ENCODE measurements at regions of chr1 and their contacts with region 1.

Region 1: DNA sequence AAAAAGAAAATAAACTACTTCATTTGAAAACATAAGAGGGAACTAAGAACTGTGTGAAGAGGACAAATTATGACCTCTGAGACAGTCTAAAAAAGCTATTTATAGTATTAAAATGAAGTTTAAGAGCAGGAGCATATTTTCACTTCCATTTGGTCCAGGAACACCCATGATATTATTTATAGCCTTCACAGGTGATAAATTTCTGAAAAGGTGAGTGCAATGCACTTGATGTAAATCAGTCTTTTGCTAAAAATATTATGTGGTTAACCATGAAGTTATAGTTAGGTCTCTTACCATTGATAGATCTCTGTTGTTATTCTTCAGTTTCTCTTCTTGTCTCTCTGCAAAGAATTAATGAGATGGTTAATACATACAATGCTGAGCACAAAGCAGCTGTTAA is 14.7 kb downstream of the TMCO1 start:
- DNase-seq: peak; percentile 49
- H3K4me3 ChIP-seq: no peak overlapping the region
- H3K27ac ChIP-seq: no peak overlapping the region
- H3K4me1 ChIP-seq: peaks cover 14% of the 10 kb centered on the region
- CTCF ChIP-seq: no peak

Region 2: DNA sequence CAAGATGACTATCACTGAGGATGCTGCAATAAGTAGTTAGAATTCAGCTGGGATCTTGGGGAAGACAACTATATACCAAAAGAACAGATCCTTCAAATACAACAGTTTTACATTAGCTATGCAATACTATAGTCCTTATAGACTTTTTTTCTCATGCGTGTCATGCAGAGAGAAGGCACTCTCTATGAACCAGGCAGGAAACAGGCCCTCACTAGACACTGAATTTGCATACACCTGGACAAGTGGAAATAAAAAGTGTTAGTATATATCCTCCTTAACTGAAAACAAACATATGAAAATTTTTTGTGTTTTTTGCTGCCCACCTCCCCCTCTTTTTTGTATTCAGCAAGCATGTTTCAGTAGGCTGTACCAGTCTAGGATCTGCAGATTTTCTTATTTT is 15.1 kb before region 1 on chr1:
- CTCF ChIA-PET with region 1: no interaction called
- POLR2A ChIA-PET with region 1: interaction called, 5 read pairs
- intact Hi-C with region 1: loop called (anchors 2 kb)
- DNase-seq: peak; percentile 70
- H3K4me3 ChIP-seq: no peak overlapping the region
- H3K27ac ChIP-seq: no peak overlapping the region
- H3K4me1 ChIP-seq: peaks cover 16% of the 10 kb centered on the region
- CTCF ChIP-seq: no peak